ENCODE measurements at regions of chr1 and their contacts with region 1.

Region 1: GRCh38 chr1:6033986-6034749 is 11.5 kb upstream of the KCNAB2 start:
- DNase-seq: peak in 3 of 5 donors; percentile 18 to 28 (median 27)
- H3K4me3 ChIP-seq: no peak overlapping the region
- H3K4me3 Mint-ChIP-seq: peak overlapping the region in 1 of 8 donors; percentile 41
- H3K27ac ChIP-seq: no peak overlapping the region
- H3K27ac Mint-ChIP-seq: peak overlapping the region in 3 of 7 donors; percentile 37 to 75 (median 75)
- H3K4me1 ChIP-seq: peaks cover 76% of the 10 kb centered on the region
- H3K4me1 Mint-ChIP-seq: peaks cover 49 to 93% (median 67%) of the 10 kb centered on the region in 4 donors
- H3K27me3 ChIP-seq: no peaks in the 10 kb centered on the region
- H3K27me3 Mint-ChIP-seq: no peaks in the 10 kb centered on the region

Region 2: DNA sequence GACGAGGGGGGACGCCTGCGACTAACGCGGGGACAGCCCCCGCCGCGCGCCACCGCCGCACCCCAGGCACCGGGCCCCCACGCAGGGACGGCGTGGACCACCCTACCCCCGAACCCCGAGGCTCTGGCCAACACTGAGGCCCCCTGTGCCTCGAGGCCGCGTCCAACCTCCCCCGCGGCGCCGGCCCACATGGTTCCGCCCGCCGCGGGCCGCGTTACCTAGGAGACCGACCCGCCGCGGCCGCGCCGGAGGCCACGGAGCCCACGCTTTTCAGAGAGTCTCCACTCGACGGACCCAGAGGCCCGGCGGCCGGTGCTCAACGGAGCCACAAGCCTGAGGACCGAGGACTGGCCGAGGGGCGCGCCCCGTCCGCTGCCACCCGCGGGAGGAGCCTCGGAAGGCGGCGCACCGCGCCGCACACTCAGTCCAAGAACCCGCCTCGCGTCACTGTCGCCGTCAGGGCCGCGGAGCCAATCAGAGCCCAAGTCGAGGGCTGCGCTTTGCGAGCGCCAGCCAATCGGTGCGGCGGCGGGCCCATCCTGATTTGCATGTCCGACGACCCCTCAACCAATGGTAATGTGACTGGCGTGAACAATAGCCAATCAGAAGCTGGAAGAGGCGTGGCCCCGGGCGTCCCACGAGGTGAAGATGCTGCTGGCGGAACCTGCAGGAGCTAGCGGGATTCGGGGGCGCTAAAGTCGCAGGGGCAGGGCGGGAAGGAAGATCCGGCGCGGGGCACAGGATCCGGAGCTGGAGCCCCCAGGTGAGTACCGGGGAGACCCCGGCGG is 41.9 kb before region 1 on chr1 and contains the start of gene NPHP4:
- CTCF ChIA-PET with region 1: interaction called, 6 read pairs
- POLR2A ChIA-PET with region 1: interaction called, 179 read pairs
- intact Hi-C with region 1: no loop called
- DNase-seq: peak; percentile 99
- H3K4me3 ChIP-seq: peak within 1 kb of the TSS; percentile 86 to 92
- H3K4me3 Mint-ChIP-seq: peak within 1 kb of the TSS; percentile 95 to 98 (median 96)
- H3K27ac ChIP-seq: peak within 1 kb of the TSS; percentile 96
- H3K27ac Mint-ChIP-seq: peak within 1 kb of the TSS; percentile 97 to 99 (median 98)
- H3K4me1 ChIP-seq: peaks cover 37% of the 10 kb centered on the region
- H3K4me1 Mint-ChIP-seq: peaks cover 13 to 39% (median 30%) of the 10 kb centered on the region in 4 donors
- H3K27me3 ChIP-seq: no peaks in the 10 kb centered on the region
- H3K27me3 Mint-ChIP-seq: no peaks in the 10 kb centered on the region
- total RNA-seq, gene NPHP4: 7.6 to 9.6 TPM

Measured in CD4-positive, alpha-beta memory T cell (primary cell).